Activated CD4-positive, alpha-beta memory T cell treated with anti-CD3 and anti-CD28 coated beads, Interleukin-2, amount 10 ng/mL, durations not matched to agents 7 days and 5 days (primary cell): ENCODE measurements at regions of chr9 and their contacts with region 1.

Region 1: GRCh38 chr9:97921959-97922724 is at the start of gene TRMO:
- DNase-seq: peak; percentile 98
- H3K4me3 Mint-ChIP-seq: peak within 1 kb of the TSS; percentile 93
- H3K27ac Mint-ChIP-seq: peak within 1 kb of the TSS; percentile 98
- H3K4me1 Mint-ChIP-seq: peaks cover 51% of the 10 kb centered on the region
- H3K27me3 Mint-ChIP-seq: peaks cover 4% of the 10 kb centered on the region
- total RNA-seq, gene TRMO: 25.4 to 27.4 TPM

Region 2: DNA sequence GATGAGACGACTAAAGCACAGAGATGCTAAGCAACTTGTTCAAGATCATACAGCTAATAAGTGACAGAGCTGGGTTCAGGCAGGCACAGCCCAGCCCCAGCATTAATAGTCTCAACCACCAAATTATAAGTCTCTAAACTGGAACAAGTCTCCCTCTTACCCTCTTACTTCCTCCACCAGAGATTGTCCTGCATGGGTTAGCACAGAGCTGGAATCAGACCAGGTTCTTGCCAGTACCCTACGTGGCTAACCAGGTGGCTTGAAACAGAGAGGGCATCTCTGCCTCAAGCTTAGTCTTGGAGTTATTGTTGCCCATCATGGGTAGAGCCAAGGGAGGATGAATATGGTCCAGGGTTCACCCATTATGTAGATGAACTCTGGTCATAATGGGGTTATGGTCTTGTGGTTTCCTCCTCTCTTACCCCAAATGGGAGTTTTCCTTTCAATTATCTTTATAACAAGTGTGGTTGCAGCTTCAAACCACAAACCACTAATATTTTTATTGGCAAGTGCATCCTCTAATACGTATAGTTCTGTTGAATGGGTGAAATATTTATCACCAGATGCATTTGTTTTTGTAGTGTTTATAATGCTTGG is 216.7 kb before region 1 on chr9:
- CTCF ChIA-PET with region 1: interaction called, 5 read pairs
- POLR2A ChIA-PET with region 1: interaction called, 11 read pairs
- DNase-seq: no peak
- H3K4me3 Mint-ChIP-seq: no peak overlapping the region
- H3K27ac Mint-ChIP-seq: no peak overlapping the region
- H3K4me1 Mint-ChIP-seq: peaks cover 37% of the 10 kb centered on the region
- H3K27me3 Mint-ChIP-seq: peaks cover 37% of the 10 kb centered on the region

Region 3: GRCh38 chr9:97906236-97906831 is 15.8 kb before region 1 on chr9:
- CTCF ChIA-PET with region 1: interaction called, 175 read pairs
- POLR2A ChIA-PET with region 1: interaction called, 360 read pairs
- DNase-seq: peak; percentile 66
- H3K4me3 Mint-ChIP-seq: peak overlapping the region; percentile 72
- H3K27ac Mint-ChIP-seq: peak overlapping the region; percentile 99
- H3K4me1 Mint-ChIP-seq: peaks cover 78% of the 10 kb centered on the region
- H3K27me3 Mint-ChIP-seq: no peaks in the 10 kb centered on the region

Region 4: GRCh38 chr9:97954550-97954989 is 32.4 kb after region 1 on chr9:
- CTCF ChIA-PET with region 1: interaction called, 57 read pairs
- POLR2A ChIA-PET with region 1: interaction called, 10 read pairs
- DNase-seq: peak; percentile 60
- H3K4me3 Mint-ChIP-seq: no peak overlapping the region
- H3K27ac Mint-ChIP-seq: no peak overlapping the region
- H3K4me1 Mint-ChIP-seq: peaks cover 11% of the 10 kb centered on the region
- H3K27me3 Mint-ChIP-seq: peaks cover 8% of the 10 kb centered on the region

Region 5: DNA sequence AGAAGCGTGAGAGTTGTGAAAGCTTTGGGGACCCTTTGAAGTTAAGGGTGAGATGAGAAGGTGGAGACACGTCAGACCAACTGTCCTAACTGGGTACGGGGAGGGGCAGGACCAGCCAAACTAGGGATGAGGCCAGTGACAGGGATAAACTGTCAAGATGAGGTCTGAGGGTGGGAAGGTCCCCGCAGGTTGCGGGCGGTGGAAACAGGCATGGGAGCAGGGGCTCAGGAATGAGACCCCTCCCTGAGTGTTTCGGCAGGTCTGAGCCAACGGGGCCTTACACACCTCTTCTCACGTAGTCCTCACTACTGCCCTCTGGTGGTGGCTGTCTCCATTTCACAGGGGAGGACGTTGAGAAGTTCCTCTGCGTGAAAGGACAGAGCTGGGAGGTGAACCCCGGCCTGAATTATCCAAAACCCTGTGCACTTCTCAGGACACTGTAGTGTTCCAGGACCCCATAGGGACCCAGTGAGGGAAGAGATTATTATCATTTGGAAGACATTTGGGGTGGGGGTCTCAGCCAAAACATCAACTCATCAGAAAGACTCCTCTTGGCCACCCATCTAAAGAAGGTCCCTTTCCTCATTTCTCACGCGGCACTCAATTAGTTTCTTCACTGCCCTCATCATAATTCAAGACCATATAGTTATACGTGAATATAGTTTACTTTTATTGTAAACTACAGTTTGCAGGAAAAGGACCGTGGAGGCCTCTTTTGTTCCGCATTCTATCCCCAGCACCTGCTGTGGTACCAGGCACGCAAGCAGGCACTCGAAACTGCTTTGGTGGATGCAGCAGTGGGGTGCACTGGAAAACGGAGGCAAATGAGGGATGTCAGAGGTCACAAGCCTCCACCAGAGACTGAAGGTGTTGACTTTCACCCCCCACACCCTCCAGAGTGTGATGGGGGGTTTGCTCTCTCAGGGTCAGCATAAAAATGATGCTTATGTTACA is 112.7 kb after region 1 on chr9:
- CTCF ChIA-PET with region 1: interaction called, 46 read pairs
- POLR2A ChIA-PET with region 1: interaction called, 17 read pairs
- DNase-seq: peak; percentile 91
- H3K4me3 Mint-ChIP-seq: no peak overlapping the region
- H3K27ac Mint-ChIP-seq: no peak overlapping the region
- H3K4me1 Mint-ChIP-seq: peaks cover 13% of the 10 kb centered on the region
- H3K27me3 Mint-ChIP-seq: peaks cover 5% of the 10 kb centered on the region

Region 6: GRCh38 chr9:98263482-98264357 is 341.6 kb after region 1 on chr9:
- CTCF ChIA-PET with region 1: interaction called, 12 read pairs
- POLR2A ChIA-PET with region 1: no interaction called
- DNase-seq: peak; percentile 88
- H3K4me3 Mint-ChIP-seq: no peak overlapping the region
- H3K27ac Mint-ChIP-seq: no peak overlapping the region
- H3K4me1 Mint-ChIP-seq: no peaks in the 10 kb centered on the region
- H3K27me3 Mint-ChIP-seq: peaks cover 25% of the 10 kb centered on the region